Activated T-helper 2 cell treated with anti-CD3 and anti-CD28 coated beads, Interferon-gamma antibody, Interleukin-2, Interleukin-4, amounts not matched to agents 10 μg/mL and 5 μg/mL and 100 μg/mL, durations not matched to agents 14 hours and 24 hours and 36 hours (primary cell): ENCODE measurements at regions of chr4 and their contacts with region 1.

Region 1: GRCh38 chr4:37603070-37603468 is 83.1 kb downstream of the RELL1 start:
- DNase-seq: peak; percentile 61
- H3K4me3 Mint-ChIP-seq: no peak overlapping the region
- H3K27ac Mint-ChIP-seq: peak overlapping the region; percentile 76
- H3K4me1 Mint-ChIP-seq: peaks cover 37% of the 10 kb centered on the region
- H3K27me3 Mint-ChIP-seq: no peaks in the 10 kb centered on the region

Region 2: GRCh38 chr4:37623125-37623524 is 20.1 kb after region 1 on chr4:
- intact Hi-C with region 1: no loop called
- DNase-seq: no peak
- H3K4me3 Mint-ChIP-seq: no peak overlapping the region
- H3K27ac Mint-ChIP-seq: no peak overlapping the region
- H3K4me1 Mint-ChIP-seq: no peaks in the 10 kb centered on the region
- H3K27me3 Mint-ChIP-seq: no peaks in the 10 kb centered on the region

Region 3: DNA sequence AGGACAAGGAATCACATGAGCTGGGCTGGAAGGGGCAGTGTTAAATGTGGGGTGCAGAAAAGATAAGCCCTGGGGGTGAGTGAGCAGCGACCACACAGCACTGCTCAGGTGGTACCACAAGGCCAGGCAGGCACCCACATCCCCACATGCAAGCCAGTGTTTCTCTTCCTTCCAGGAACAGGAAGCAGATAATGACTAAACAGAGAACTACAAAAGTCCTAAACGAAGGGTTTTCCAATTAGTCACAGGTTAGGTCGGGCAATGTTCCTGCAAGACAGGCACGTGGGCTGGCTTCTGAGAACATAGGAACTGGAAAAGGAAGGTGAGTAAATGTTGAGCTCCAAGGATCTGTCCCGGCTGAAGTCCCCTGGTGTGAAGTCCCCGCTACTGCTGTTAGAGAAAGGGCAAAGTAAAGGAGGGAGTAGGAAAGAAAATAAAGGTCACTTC is 63.6 kb after region 1 on chr4:
- intact Hi-C with region 1: loop called (anchors 1 kb)
- DNase-seq: no peak
- H3K4me3 Mint-ChIP-seq: peak overlapping the region; percentile 19
- H3K27ac Mint-ChIP-seq: peak overlapping the region; percentile 61
- H3K4me1 Mint-ChIP-seq: peaks cover 44% of the 10 kb centered on the region
- H3K27me3 Mint-ChIP-seq: no peaks in the 10 kb centered on the region

Region 4: GRCh38 chr4:37780444-37781150 is 177.5 kb after region 1 on chr4:
- intact Hi-C with region 1: loop called (anchors 5 kb)
- DNase-seq: peak; percentile 28
- H3K4me3 Mint-ChIP-seq: no peak overlapping the region
- H3K27ac Mint-ChIP-seq: no peak overlapping the region
- H3K4me1 Mint-ChIP-seq: peaks cover 10% of the 10 kb centered on the region
- H3K27me3 Mint-ChIP-seq: no peaks in the 10 kb centered on the region

Region 5: DNA sequence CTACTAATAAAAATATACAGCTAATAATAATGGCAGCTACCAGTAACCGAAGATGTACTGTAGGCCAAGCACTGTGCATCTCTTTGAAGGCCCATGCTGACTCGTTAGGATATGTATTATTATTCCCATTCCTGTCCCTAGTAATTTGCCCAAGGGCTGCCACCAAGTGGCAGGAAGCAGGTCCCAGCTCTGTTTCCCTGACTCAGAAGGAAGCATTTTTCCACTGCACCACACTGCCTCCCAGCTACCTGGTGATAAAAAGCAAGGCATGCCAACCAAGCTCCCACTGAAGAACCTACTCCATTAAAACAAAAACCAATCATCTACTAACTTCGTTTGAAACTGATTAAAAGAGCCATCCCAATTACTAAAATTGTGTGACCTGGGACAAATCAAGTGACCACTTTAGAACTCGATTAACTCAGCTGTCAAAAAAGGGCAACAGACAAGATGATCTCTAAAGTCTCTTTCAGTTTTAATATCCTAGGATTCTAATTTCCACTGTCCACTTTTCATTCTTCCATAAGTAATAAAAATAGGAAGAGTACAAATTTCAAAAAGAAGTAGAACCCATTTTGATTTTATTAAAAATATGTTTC is 199.1 kb after region 1 on chr4:
- intact Hi-C with region 1: loop called (anchors 5 kb)
- DNase-seq: no peak
- H3K4me3 Mint-ChIP-seq: no peak overlapping the region
- H3K27ac Mint-ChIP-seq: no peak overlapping the region
- H3K4me1 Mint-ChIP-seq: no peaks in the 10 kb centered on the region
- H3K27me3 Mint-ChIP-seq: peaks cover 14% of the 10 kb centered on the region

Region 6: DNA sequence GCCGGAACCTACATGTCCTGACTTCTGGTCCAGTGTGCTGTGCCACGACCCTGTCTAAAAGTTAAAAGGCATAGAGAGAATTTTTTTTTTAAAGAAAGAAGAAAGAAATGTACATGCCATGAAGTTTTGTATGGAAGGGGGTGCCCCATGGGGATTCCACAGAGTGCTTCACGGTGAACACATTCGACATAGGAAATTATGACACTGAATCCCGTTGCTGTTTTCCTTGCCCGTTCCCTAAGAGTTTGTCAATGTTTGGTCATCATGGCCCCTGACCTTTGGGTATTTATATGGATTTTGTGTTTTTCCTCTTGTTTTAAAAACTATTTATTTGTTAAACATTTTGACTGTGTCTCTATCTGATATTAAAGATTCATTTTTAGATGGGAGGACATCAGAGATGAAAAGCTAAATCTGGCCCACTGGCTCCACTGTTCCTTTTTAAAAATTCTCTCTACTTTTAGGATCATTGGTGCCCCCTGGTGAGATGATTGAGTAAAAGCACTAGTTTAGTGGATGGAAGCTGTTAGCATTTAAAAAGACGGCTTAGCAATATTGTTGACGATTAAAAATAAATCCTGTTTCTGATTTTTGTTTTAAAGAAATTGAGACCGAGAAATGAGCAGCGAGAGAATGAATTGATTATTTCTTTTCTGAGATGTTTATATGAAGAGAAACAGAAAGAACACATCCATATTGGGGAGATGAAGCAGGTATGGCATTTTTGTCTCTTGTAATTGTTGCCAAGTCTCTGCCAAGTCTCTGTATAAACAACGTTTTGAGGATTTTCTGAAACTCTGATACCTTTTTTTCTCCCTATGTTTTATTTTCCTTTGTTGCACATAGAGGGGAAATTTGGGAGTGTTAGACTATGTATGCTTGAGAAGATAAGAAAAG is 432.2 kb after region 1 on chr4:
- intact Hi-C with region 1: loop called (anchors 5 kb)
- DNase-seq: no peak
- H3K4me3 Mint-ChIP-seq: no peak overlapping the region
- H3K27ac Mint-ChIP-seq: no peak overlapping the region
- H3K4me1 Mint-ChIP-seq: no peaks in the 10 kb centered on the region
- H3K27me3 Mint-ChIP-seq: no peaks in the 10 kb centered on the region